Heart right ventricle (tissue), 16 donors: ENCODE measurements at regions of chr1 and their contacts with region 1.

Region 1: DNA sequence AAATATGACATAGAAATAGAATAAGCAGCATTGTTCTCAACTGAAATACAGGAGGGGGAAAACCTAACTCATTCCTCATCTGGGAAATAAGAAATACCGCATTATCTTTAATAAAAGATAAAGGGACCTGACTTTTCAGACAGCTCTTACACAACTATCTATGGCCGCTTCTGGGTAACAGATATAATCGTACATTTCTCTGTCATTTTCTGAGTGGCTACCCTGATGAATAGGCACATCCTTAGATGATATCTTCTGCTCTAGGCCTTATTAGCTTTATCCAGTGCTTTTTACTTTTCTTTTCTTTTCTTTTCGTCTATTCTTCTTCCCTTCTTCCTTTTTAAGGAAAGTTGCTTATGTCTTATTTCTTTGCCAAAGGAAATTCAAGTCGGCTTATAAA is 356.9 kb upstream of the GREM2 start:
- DNase-seq: no peak
- ATAC-seq: no peak
- H3K4me3 ChIP-seq: no peak overlapping the region
- H3K27ac ChIP-seq: no peak overlapping the region
- H3K4me1 ChIP-seq: no peaks in the 10 kb centered on the region
- H3K27me3 ChIP-seq: peaks cover 0 to 3% (median 0%) of the 10 kb centered on the region in 7 donors
- CTCF ChIP-seq: no peak

Region 2: GRCh38 chr1:240935920-240936319 is 32.9 kb before region 1 on chr1:
- intact Hi-C with region 1: loop called in 1 of 10 experiments (anchors 1 kb)
- DNase-seq: no peak
- ATAC-seq: no peak
- H3K4me3 ChIP-seq: no peak overlapping the region
- H3K27ac ChIP-seq: no peak overlapping the region
- H3K4me1 ChIP-seq: no peaks in the 10 kb centered on the region
- H3K27me3 ChIP-seq: no peaks in the 10 kb centered on the region
- CTCF ChIP-seq: no peak